ENCODE measurements at regions of chr3 and their contacts with region 1.

Region 1: DNA sequence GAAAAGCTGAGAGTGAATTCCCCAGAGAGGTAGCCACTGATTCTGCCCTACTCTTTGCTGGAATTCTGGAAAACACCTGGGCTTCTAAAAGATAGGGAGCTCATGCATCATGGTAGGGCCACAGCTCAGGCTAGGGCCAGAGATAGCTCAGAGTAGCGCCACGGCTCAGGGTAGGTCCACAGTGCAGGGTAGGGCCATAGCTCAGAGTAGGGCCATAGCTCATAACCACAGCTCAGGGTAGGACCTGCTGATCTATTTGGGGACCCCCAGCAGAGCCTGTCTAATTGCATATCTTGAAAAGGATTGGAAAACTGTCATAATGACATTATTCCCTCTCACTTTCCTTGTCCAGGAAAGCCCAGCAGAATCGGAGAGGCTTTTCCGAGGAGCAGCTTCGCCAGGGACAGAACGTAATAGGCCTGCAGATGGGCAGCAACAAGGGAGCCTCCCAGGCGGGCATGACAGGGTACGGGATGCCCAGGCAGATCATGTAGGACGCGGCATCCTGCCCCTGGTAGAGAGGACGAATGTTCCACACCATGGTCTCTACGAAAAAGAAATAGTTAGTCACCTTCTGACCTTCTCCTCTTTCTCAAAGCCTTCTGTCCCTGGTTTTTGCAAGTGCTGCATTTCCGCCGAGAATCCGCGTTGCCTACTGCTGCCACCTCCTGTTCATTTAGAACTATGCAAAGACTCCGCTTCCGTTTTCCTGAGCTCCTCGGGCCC is 14.5 kb downstream of the TAGLN3 start:
- DNase-seq: peak; percentile 70
- ATAC-seq: peak; percentile 81
- H3K4me3 Mint-ChIP-seq: no peak overlapping the region
- H3K27ac Mint-ChIP-seq: no peak overlapping the region
- H3K4me1 Mint-ChIP-seq: peaks cover 13% of the 10 kb centered on the region
- H3K27me3 Mint-ChIP-seq: no peaks in the 10 kb centered on the region

Region 2: GRCh38 chr3:111723293-111724215 is 289.7 kb before region 1 on chr3:
- CTCF ChIA-PET with region 1: interaction called, 10 read pairs
- DNase-seq: no peak
- ATAC-seq: no peak
- H3K4me3 Mint-ChIP-seq: no peak overlapping the region
- H3K27ac Mint-ChIP-seq: no peak overlapping the region
- H3K4me1 Mint-ChIP-seq: peaks cover 6% of the 10 kb centered on the region
- H3K27me3 Mint-ChIP-seq: no peaks in the 10 kb centered on the region

Region 3: GRCh38 chr3:111978493-111979433 is 34.5 kb before region 1 on chr3 and contains the start of gene ABHD10:
- CTCF ChIA-PET with region 1: interaction called, 40 read pairs
- DNase-seq: peak; percentile 99
- ATAC-seq: peak; percentile 96
- H3K4me3 Mint-ChIP-seq: peak within 1 kb of the TSS; percentile 92
- H3K27ac Mint-ChIP-seq: peak within 1 kb of the TSS; percentile 94
- H3K4me1 Mint-ChIP-seq: peaks cover 39% of the 10 kb centered on the region
- H3K27me3 Mint-ChIP-seq: no peaks in the 10 kb centered on the region
- total RNA-seq, gene ABHD10: 45.2 to 50.7 TPM

Region 4: GRCh38 chr3:111998636-111999483 is 14.4 kb before region 1 on chr3 and contains the start of gene TAGLN3:
- CTCF ChIA-PET with region 1: interaction called, 45 read pairs
- DNase-seq: no peak
- ATAC-seq: no peak
- H3K4me3 Mint-ChIP-seq: peak within 1 kb of the TSS; percentile 42
- H3K27ac Mint-ChIP-seq: no peak within 1 kb of the TSS
- H3K4me1 Mint-ChIP-seq: peaks cover 22% of the 10 kb centered on the region
- H3K27me3 Mint-ChIP-seq: no peaks in the 10 kb centered on the region
- total RNA-seq, gene TAGLN3: not detected

Region 5: DNA sequence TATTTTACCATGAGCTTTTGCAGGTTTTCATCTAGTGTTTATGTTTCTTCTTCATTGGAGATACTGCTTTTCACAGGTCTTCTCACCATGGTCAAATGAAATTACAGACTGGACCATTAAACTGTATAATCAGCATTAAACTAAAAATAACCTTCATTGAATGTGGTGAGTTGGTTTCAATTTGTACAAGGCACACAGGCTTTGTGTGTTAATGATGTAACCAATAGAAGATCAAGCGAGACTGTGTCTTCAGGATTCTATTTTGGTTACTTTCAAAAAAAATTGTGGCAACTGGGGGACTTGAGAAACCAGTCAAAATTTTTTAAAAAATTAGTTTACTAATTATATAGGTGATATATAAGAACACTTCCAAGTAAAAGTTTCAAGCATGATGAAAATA is 174.1 kb after region 1 on chr3:
- CTCF ChIA-PET with region 1: no interaction called
- DNase-seq: no peak
- ATAC-seq: no peak
- H3K4me3 Mint-ChIP-seq: no peak overlapping the region
- H3K27ac Mint-ChIP-seq: no peak overlapping the region
- H3K4me1 Mint-ChIP-seq: no peaks in the 10 kb centered on the region
- H3K27me3 Mint-ChIP-seq: peaks cover 15% of the 10 kb centered on the region